Activated T-helper 1 cell treated with anti-CD3 and anti-CD28 coated beads, Interleukin-12 subunit alpha, Interleukin-12 subunit beta, Interleukin-2, Interleukin-4 antibody, amounts not matched to agents 30 ng/mL and 10 ng/mL and 1 ng/mL, durations not matched to agents 14 hours and 24 hours and 36 hours (primary cell): ENCODE measurements at regions of chr2 and their contacts with region 1.

Region 1: GRCh38 chr2:73163483-73164367 is 38.6 kb upstream of the NOTO start:
- DNase-seq: peak; percentile 37
- H3K4me3 Mint-ChIP-seq: no peak overlapping the region
- H3K27ac Mint-ChIP-seq: no peak overlapping the region
- H3K4me1 Mint-ChIP-seq: no peaks in the 10 kb centered on the region
- H3K27me3 Mint-ChIP-seq: peaks cover 9% of the 10 kb centered on the region

Region 2: GRCh38 chr2:73085691-73086360 is 77.9 kb before region 1 on chr2:
- intact Hi-C with region 1: loop called (anchors 1 kb)
- DNase-seq: peak; percentile 69
- H3K4me3 Mint-ChIP-seq: no peak overlapping the region
- H3K27ac Mint-ChIP-seq: no peak overlapping the region
- H3K4me1 Mint-ChIP-seq: no peaks in the 10 kb centered on the region
- H3K27me3 Mint-ChIP-seq: no peaks in the 10 kb centered on the region

Region 3: DNA sequence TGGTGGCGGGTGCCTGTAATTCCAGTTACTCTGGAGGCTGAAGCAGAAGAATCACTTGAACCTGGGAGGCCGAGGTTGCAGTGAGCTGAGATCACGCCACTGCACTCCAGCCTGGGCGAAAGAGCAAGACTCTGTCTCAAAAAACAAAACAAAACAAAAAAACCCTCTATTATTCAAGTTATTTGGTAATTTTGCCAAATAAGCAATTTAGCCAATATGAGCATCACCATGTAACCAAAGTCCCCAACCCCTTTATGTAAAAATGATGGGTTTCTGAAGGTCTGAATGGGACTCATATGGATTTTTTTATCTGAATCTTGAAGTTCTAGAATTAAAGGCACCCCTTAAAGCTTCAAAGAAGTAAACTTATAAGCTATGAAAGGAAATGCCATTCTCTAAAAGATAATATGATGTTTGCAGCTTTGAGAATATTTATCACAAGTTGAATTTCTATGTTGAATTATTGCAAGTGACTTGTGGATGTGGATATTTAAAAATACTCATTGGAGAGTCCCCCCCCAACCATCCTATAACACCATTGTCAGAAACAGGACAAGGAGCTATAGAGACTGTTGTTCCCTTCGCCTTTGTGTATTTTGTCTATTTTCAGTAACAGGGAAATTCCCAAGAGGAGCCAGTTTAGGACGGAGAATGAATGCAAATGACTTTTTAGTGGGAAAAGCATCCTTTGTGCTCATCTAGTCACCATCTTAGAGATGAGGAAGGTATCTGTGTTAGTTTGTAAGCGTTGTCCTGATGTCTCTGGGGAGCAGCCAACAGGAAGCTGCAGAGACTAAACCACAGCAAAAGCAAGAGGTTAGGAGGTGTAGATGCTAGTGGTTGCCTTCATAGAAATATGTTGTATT is 889.2 kb after region 1 on chr2:
- intact Hi-C with region 1: no loop called
- DNase-seq: peak; percentile 27
- H3K4me3 Mint-ChIP-seq: peak overlapping the region; percentile 31
- H3K27ac Mint-ChIP-seq: peak overlapping the region; percentile 36
- H3K4me1 Mint-ChIP-seq: peaks cover 17% of the 10 kb centered on the region
- H3K27me3 Mint-ChIP-seq: no peaks in the 10 kb centered on the region